CD8-positive, alpha-beta T cell (primary cell): ENCODE measurements at regions of chr16 and their contacts with region 1.

Region 1: DNA sequence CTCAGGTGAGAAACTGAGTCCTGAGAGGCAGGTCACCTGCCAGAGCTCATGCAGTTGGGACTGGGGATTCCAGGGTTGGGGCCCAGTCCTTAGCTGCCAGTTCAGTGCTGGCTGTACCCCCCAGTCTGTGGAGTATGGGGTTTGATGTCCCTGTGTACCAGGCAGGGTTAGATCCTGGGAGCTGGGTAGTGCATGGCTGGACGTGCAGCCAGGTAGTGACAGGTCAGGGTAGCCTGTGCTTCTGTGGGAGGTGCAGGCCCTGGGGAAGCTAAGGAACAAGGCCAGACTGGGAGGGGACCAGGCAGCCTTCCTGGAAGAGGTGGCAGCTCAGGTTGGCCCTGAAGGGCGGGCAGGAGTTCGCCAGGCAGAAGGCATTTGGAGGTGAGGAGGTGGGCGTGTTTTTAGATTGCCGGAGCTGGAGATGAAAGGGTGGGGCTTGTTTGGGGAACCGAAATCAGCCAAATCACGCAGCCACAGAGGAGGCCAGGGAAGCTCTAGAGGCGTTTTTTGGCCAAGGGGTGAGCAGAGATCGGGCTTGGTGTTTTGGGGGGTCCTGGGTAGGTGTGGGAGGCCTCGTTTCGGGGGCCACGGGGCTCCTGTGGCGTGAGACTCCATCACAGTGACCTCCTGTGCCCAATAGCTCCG is 7.5 kb downstream of the ADCY7 start:
- DNase-seq: peak in 5 of 9 experiments; percentile 39 to 68 (median 50)
- ATAC-seq: peak; percentile 32
- H3K4me3 ChIP-seq: peak overlapping the region; percentile 46 to 80
- H3K4me3 Mint-ChIP-seq: peak overlapping the region; percentile 86
- H3K27ac ChIP-seq: peak overlapping the region; percentile 81 to 88
- H3K27ac Mint-ChIP-seq: peak overlapping the region; percentile 98
- H3K4me1 ChIP-seq: peaks cover 97% of the 10 kb centered on the region
- H3K4me1 Mint-ChIP-seq: peaks cover 97% of the 10 kb centered on the region
- H3K27me3 ChIP-seq: no peaks in the 10 kb centered on the region
- H3K27me3 Mint-ChIP-seq: no peaks in the 10 kb centered on the region
- CTCF ChIP-seq: no peak

Region 2: GRCh38 chr16:50235581-50235980 is 38.2 kb before region 1 on chr16:
- CTCF ChIA-PET with region 1: no interaction called
- POLR2A ChIA-PET with region 1: no interaction called
- intact Hi-C with region 1: no loop called
- DNase-seq: no peak
- ATAC-seq: no peak
- H3K4me3 ChIP-seq: no peak overlapping the region
- H3K4me3 Mint-ChIP-seq: no peak overlapping the region
- H3K27ac ChIP-seq: no peak overlapping the region
- H3K27ac Mint-ChIP-seq: no peak overlapping the region
- H3K4me1 ChIP-seq: no peaks in the 10 kb centered on the region
- H3K4me1 Mint-ChIP-seq: no peaks in the 10 kb centered on the region
- H3K27me3 ChIP-seq: no peaks in the 10 kb centered on the region
- H3K27me3 Mint-ChIP-seq: no peaks in the 10 kb centered on the region
- CTCF ChIP-seq: no peak

Region 3: GRCh38 chr16:50320306-50320705 is 46.5 kb after region 1 on chr16:
- CTCF ChIA-PET with region 1: interaction called, 23 read pairs
- POLR2A ChIA-PET with region 1: interaction called, 10 read pairs
- intact Hi-C with region 1: no loop called
- DNase-seq: no peak
- ATAC-seq: no peak
- H3K4me3 ChIP-seq: no peak overlapping the region
- H3K4me3 Mint-ChIP-seq: no peak overlapping the region
- H3K27ac ChIP-seq: no peak overlapping the region
- H3K27ac Mint-ChIP-seq: peak overlapping the region; percentile 62
- H3K4me1 ChIP-seq: peaks cover 6% of the 10 kb centered on the region
- H3K4me1 Mint-ChIP-seq: peaks cover 41% of the 10 kb centered on the region
- H3K27me3 ChIP-seq: no peaks in the 10 kb centered on the region
- H3K27me3 Mint-ChIP-seq: no peaks in the 10 kb centered on the region
- CTCF ChIP-seq: no peak